Activated T-helper 2 cell treated with anti-CD3 and anti-CD28 coated beads, Interferon-gamma antibody, Interleukin-2, Interleukin-4, amounts not matched to agents 10 μg/mL and 5 μg/mL and 100 μg/mL, durations not matched to agents 14 hours and 24 hours and 36 hours (primary cell): ENCODE measurements at regions of chr1 and their contacts with region 1.

Region 1: DNA sequence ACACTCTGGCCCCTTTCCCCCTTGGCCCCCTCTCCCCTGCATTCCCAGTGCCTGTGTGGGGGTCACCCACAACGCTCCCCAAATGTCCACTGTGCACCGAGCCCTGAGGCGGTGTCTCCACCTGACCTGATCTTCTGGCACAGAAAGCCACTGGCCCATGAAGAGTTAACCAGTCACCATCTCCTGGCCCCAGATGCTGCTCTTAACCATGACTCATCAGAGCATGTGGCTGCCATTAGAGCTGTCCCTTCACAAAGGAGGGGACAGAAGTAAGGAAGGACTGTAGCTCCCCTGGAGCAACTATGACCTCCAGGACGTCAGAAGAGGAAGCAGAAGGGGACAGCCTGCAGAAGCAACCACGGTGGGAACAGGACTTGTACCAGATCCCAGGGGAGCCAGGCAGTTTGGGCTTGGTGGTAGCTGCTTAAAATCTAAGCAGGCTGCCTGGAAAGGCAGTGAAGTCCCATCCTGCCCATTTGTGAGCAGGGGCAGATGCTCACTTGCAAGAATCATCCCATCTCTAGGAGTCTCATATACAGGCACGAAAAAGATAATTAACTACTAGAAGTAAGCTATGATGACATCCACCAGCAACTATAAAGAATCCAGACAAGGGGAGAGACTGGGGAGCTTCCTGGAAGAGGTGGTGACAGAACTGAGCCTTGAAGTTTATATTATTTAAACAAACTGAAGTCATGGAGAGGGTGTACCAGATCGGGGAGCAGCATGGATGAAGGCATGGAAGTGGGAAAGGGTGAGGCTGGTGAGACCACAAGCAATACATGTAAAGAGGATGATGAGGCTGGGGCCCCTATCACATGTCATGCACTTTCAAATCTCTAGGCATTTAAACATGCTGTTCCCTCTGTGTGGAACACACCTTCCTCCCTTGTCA is 1.1 kb upstream of the TTC39A start:
- DNase-seq: no peak
- H3K4me3 Mint-ChIP-seq: peak overlapping the region; percentile 84
- H3K27ac Mint-ChIP-seq: peak overlapping the region; percentile 35
- H3K4me1 Mint-ChIP-seq: peaks cover 13% of the 10 kb centered on the region
- H3K27me3 Mint-ChIP-seq: peaks cover 25% of the 10 kb centered on the region

Region 2: GRCh38 chr1:51268634-51269033 is 62.8 kb before region 1 on chr1:
- intact Hi-C with region 1: no loop called
- DNase-seq: no peak
- H3K4me3 Mint-ChIP-seq: peak overlapping the region; percentile 14
- H3K27ac Mint-ChIP-seq: peak overlapping the region; percentile 44
- H3K4me1 Mint-ChIP-seq: peaks cover 67% of the 10 kb centered on the region
- H3K27me3 Mint-ChIP-seq: no peaks in the 10 kb centered on the region

Region 3: DNA sequence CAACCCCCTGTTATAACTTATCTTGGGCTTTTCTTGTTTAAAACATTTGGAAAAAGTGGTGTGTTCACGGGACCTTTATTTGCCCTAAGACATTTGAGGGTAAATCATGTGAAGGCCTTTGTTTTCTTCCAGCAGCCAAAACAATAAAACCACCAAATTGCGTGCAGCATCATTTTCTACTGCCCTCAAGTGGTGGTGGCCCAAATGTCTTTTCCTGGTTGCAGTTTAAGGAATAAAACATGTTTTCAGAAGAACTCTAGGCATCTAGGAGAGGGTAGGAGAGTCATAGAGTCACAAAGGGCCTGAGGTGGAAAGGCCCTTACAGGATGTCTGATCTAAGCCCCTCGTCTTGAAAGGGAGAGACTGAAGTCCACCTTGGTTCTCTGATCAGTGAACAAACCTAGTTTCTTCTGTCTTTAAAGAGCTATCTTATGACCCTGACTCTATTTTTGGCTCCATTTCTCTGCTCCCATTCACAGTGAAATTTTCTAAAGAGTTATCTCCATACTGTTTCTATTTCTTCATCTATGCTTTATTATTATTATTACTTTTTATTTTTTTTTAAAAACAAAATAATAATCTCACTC is 203.6 kb after region 1 on chr1:
- intact Hi-C with region 1: loop called (anchors 10 kb)
- DNase-seq: no peak
- H3K4me3 Mint-ChIP-seq: no peak overlapping the region
- H3K27ac Mint-ChIP-seq: no peak overlapping the region
- H3K4me1 Mint-ChIP-seq: peaks cover 20% of the 10 kb centered on the region
- H3K27me3 Mint-ChIP-seq: no peaks in the 10 kb centered on the region